ENCODE measurements at regions of chr1 and their contacts with region 1.

Region 1: GRCh38 chr1:63691701-63692425 is 82.0 kb upstream of the ROR1 start:
- DNase-seq: peak; percentile 68
- H3K4me3 ChIP-seq: no peak overlapping the region
- H3K27ac ChIP-seq: no peak overlapping the region
- H3K4me1 ChIP-seq: no peaks in the 10 kb centered on the region
- H3K27me3 ChIP-seq: no peaks in the 10 kb centered on the region
- CTCF ChIP-seq: peak; percentile 83 to 86

Region 2: GRCh38 chr1:63615768-63616420 is 76.0 kb before region 1 on chr1:
- CTCF ChIA-PET with region 1: interaction called, 3 read pairs
- dilution Hi-C with region 1: no loop called
- in situ Hi-C with region 1: no loop called
- intact Hi-C with region 1: loop called (anchors 1 kb)
- DNase-seq: peak; percentile 58
- H3K4me3 ChIP-seq: no peak overlapping the region
- H3K27ac ChIP-seq: no peak overlapping the region
- H3K4me1 ChIP-seq: peaks cover 4% of the 10 kb centered on the region
- H3K27me3 ChIP-seq: no peaks in the 10 kb centered on the region
- CTCF ChIP-seq: peak; percentile 60 to 75

Region 3: DNA sequence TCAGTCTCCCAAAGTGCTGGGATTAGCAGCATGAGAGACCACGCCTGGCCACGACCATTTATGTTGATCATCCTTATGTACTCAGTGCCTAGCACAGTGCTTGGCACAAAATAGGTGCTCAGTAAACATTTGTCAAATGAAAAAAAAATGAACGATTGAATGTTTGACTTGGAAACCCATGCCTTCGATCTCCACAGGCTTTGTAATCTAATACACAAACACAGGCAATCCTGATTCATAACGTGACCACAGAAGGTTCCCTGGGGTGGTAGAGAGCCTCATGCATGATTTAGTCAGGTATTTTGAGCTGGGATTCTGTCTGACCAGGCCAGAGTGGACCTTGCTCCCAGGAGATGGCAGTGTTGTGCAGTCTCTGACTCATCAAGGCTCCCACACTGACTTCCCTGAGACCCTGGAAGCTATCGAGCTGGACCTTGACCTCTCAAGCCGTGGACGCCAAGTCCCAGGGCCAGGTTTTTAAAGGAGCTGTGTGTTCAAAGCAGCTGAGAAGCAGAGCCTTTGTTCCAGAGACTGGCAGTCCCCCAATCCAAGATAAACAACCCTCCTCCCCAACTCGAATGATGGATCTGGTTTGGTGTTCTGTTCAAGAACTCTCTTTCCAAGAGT is 17.5 kb before region 1 on chr1:
- CTCF ChIA-PET with region 1: interaction called, 7 read pairs
- dilution Hi-C with region 1: no loop called
- in situ Hi-C with region 1: no loop called
- intact Hi-C with region 1: loop called (anchors 1 kb)
- DNase-seq: peak; percentile 85
- H3K4me3 ChIP-seq: no peak overlapping the region
- H3K27ac ChIP-seq: no peak overlapping the region
- H3K4me1 ChIP-seq: peaks cover 13% of the 10 kb centered on the region
- H3K27me3 ChIP-seq: no peaks in the 10 kb centered on the region
- CTCF ChIP-seq: peak; percentile 76 to 77

Region 4: GRCh38 chr1:63813829-63814277 is 122.0 kb after region 1 on chr1:
- CTCF ChIA-PET with region 1: no interaction called
- dilution Hi-C with region 1: no loop called
- in situ Hi-C with region 1: no loop called
- intact Hi-C with region 1: no loop called
- DNase-seq: peak; percentile 68
- H3K4me3 ChIP-seq: no peak overlapping the region
- H3K27ac ChIP-seq: no peak overlapping the region
- H3K4me1 ChIP-seq: peaks cover 12% of the 10 kb centered on the region
- H3K27me3 ChIP-seq: no peaks in the 10 kb centered on the region
- CTCF ChIP-seq: no peak

Region 5: DNA sequence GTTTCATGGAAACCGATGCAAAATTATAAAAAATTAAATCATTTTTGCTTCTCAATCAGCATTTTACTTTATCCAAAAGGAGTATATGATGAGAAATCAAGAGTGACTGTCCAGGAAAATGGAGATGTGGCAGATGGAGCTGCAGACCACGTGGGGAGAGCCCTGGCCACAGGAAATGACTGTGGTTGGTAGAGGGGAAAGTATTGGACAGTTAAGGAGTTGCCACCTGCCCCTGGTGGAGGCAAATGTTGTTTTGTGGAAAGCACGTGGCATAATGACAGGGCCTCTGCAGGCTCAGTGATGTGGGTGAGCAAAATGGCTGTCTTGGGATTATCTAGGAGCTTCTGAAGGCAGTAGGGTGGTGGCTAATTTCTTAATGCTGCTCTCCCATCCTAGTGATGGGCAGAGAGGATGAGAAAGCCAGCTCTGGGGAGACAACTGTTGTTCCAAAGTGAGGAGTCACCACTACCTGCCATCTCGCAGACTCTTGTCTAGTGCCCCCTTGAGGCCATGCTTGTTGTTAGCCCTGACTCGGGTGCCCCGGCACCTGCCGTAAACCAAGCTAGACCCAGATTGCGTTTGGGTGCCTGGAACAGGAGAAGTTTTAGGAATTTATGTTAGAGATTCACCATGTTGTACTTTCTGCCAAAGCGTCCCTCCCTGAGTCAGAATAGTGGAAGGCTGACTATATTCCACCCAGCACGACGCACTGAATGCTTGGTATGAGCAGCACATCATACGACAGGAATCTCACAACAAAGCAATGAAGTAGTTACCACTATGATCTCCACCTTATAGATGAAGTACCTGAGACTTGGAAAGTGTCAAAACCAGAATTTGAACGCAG is 225.9 kb after region 1 on chr1:
- CTCF ChIA-PET with region 1: interaction called, 8 read pairs
- dilution Hi-C with region 1: no loop called
- in situ Hi-C with region 1: no loop called
- intact Hi-C with region 1: loop called (anchors 5 kb)
- DNase-seq: no peak
- H3K4me3 ChIP-seq: no peak overlapping the region
- H3K27ac ChIP-seq: no peak overlapping the region
- H3K4me1 ChIP-seq: peaks cover 35% of the 10 kb centered on the region
- H3K27me3 ChIP-seq: no peaks in the 10 kb centered on the region
- CTCF ChIP-seq: peak; percentile 31 to 33

Region 6: DNA sequence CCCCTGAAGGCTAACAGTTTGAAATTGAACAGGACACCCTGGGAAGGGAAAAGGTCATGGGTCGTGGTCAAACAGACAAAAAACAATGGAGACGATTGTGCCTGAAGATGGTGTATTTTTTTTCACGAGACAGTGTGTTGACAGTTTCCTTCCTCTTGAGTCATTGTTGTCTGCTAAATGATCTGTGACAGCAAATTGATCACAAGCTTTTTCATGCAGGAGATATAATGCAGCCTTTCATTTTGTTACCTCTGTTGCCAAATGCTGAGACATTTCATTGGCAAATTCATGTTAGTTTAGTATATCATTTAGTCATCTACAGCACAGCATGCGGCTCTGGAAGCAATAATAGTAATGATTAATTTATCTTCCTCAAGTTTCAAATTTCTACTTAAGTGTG is 539.3 kb after region 1 on chr1:
- CTCF ChIA-PET with region 1: no interaction called
- dilution Hi-C with region 1: no loop called
- in situ Hi-C with region 1: loop called in 1 of 2 experiments (anchors 10 kb)
- intact Hi-C with region 1: no loop called
- DNase-seq: peak; percentile 60
- H3K4me3 ChIP-seq: no peak overlapping the region
- H3K27ac ChIP-seq: no peak overlapping the region
- H3K4me1 ChIP-seq: peaks cover 5% of the 10 kb centered on the region
- H3K27me3 ChIP-seq: no peaks in the 10 kb centered on the region
- CTCF ChIP-seq: no peak